Activated CD4-positive, alpha-beta T cell treated with anti-CD3 and anti-CD28 coated beads for 36 hours (primary cell): ENCODE measurements at regions of chr15 and their contacts with region 1.

Region 1: DNA sequence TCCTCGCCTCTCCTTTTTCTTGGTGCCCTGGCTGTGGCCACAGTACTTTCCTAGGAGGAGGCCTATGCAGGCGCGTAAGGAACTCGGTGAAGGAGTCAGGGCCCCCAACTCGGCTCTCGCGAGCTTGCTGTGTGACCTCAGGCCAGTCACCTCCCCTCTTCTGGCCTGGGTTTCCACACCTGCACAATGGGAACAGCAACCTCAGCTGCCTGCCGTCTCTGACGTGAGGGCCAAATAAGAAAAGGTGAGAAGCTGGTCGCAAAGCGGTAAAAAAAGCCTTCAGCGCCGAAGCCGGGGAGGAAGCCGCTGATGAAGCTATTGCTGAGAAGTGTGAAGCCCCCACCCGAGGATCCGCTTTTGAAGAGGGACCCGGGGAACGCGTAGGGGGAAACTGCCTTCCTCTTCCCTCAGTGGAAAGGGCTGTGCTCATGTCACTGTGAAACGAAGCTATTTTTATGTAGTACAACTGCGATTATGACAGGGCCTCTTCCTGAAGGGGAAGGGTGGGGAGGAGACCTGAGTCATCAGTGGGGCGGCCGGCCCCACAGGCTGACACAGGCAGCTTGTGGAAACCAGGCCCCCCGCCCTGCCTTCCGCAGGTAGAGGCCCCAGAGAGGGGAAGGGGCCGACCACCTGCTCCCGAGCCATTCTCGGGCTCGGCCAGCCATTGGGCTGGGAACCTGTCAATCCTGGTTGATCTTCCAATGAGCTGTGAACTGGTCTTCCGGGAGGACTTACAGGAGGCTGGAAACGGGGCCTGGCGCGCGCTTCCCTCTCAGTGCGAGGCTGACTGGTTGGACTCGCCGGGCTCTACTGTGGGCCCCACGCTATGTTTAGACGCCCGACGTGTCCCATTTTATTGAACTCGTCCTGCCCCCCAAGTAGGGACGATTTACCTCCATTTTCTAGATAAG is 18.0 kb upstream of the ANKDD1A start:
- DNase-seq: peak; percentile 99
- ATAC-seq: peak; percentile 84
- H3K4me3 Mint-ChIP-seq: peak overlapping the region; percentile 94
- H3K27ac Mint-ChIP-seq: peak overlapping the region; percentile 93
- H3K4me1 Mint-ChIP-seq: peaks cover 54% of the 10 kb centered on the region
- H3K27me3 Mint-ChIP-seq: no peaks in the 10 kb centered on the region

Region 2: GRCh38 chr15:63188926-63189871 is 1704.5 kb before region 1 on chr15 and contains the start of gene RAB8B:
- CTCF ChIA-PET with region 1: no interaction called
- POLR2A ChIA-PET with region 1: no interaction called
- intact Hi-C with region 1: loop called in 1 of 2 experiments (anchors 5 kb)
- DNase-seq: peak; percentile 100
- ATAC-seq: peak; percentile 76
- H3K4me3 Mint-ChIP-seq: peak within 1 kb of the TSS; percentile 99
- H3K27ac Mint-ChIP-seq: peak within 1 kb of the TSS; percentile 97
- H3K4me1 Mint-ChIP-seq: peaks cover 39% of the 10 kb centered on the region
- H3K27me3 Mint-ChIP-seq: no peaks in the 10 kb centered on the region
- total RNA-seq, gene RAB8B: 147 to 260 TPM

Region 3: GRCh38 chr15:64387562-64388168 is 506.1 kb before region 1 on chr15 and contains the start of gene TRIP4:
- CTCF ChIA-PET with region 1: no interaction called
- POLR2A ChIA-PET with region 1: no interaction called
- intact Hi-C with region 1: loop called in 1 of 2 experiments (anchors 1 kb)
- DNase-seq: peak; percentile 98
- ATAC-seq: peak; percentile 100
- H3K4me3 Mint-ChIP-seq: peak within 1 kb of the TSS; percentile 85
- H3K27ac Mint-ChIP-seq: peak within 1 kb of the TSS; percentile 91
- H3K4me1 Mint-ChIP-seq: peaks cover 17% of the 10 kb centered on the region
- H3K27me3 Mint-ChIP-seq: no peaks in the 10 kb centered on the region
- total RNA-seq, gene TRIP4: 13.1 to 19.6 TPM

Region 4: GRCh38 chr15:64800476-64800875 is 93.3 kb before region 1 on chr15:
- CTCF ChIA-PET with region 1: no interaction called
- POLR2A ChIA-PET with region 1: no interaction called
- intact Hi-C with region 1: no loop called
- DNase-seq: no peak
- ATAC-seq: no peak
- H3K4me3 Mint-ChIP-seq: no peak overlapping the region
- H3K27ac Mint-ChIP-seq: no peak overlapping the region
- H3K4me1 Mint-ChIP-seq: no peaks in the 10 kb centered on the region
- H3K27me3 Mint-ChIP-seq: no peaks in the 10 kb centered on the region

Region 5: GRCh38 chr15:64825431-64826294 is 68.1 kb before region 1 on chr15 and contains the start of gene PIF1:
- CTCF ChIA-PET with region 1: interaction called, 5 read pairs
- POLR2A ChIA-PET with region 1: interaction called, 5 read pairs
- intact Hi-C with region 1: loop called (anchors 1 kb)
- DNase-seq: peak; percentile 92
- ATAC-seq: peak; percentile 94
- H3K4me3 Mint-ChIP-seq: peak within 1 kb of the TSS; percentile 87
- H3K27ac Mint-ChIP-seq: peak within 1 kb of the TSS; percentile 93
- H3K4me1 Mint-ChIP-seq: peaks cover 23% of the 10 kb centered on the region
- H3K27me3 Mint-ChIP-seq: peaks cover 6% of the 10 kb centered on the region
- total RNA-seq, gene PIF1: 30.0 to 36.3 TPM

Region 6: GRCh38 chr15:64905119-64905831 is 11.5 kb after region 1 on chr15:
- CTCF ChIA-PET with region 1: interaction called, 14 read pairs
- POLR2A ChIA-PET with region 1: interaction called, 9 read pairs
- intact Hi-C with region 1: loop called (anchors 1 kb)
- DNase-seq: peak; percentile 91
- ATAC-seq: peak; percentile 87
- H3K4me3 Mint-ChIP-seq: peak overlapping the region; percentile 67
- H3K27ac Mint-ChIP-seq: peak overlapping the region; percentile 87
- H3K4me1 Mint-ChIP-seq: peaks cover 34% of the 10 kb centered on the region
- H3K27me3 Mint-ChIP-seq: peaks cover 6% of the 10 kb centered on the region

Region 7: DNA sequence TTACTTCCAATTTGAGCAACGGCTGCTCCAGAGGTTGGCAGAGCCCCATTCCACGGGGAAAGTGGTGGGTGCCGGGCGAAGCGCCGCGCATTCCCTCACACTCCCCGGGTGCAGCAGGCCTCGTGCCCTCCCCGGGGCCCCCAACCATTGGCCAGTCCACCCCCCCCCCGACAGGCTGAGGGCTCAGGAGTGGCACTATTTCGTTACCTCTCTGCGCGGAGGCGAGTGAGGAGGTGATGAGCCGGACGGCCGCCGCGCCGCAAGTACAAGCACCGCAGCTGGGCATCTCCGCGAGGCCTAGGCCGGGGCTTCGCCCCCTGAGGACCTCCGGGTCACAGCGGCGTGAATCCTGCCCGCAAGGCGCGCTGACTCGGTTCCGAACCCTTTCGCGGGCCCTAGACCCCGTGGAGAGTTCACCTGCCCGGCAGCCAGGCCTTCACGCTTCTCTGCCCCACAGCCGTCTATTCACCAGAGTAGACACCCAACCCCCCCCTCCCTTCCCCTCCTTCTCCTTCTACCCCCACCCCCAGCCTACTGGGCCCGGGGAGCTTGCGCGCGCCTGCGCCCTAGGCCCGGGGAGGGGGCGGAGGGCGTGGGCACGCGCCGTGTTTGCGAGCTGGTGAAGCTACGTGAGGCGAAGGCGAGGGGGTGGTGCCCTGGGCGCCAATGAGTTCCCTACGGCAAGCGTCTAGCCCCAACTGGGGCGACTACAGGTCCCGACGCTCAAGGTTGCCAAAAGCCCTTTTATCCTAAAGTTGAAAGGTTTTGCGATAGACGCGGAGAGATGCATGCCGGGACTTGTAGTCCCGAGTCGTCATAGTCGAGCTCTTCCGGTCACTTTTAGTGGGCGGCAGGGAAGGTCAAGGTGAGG is 291.4 kb after region 1 on chr15 and contains the start of gene CLPX:
- CTCF ChIA-PET with region 1: no interaction called
- POLR2A ChIA-PET with region 1: no interaction called
- intact Hi-C with region 1: loop called in 1 of 2 experiments (anchors 1 kb)
- DNase-seq: peak; percentile 95
- ATAC-seq: peak; percentile 93
- H3K4me3 Mint-ChIP-seq: peak within 1 kb of the TSS; percentile 92
- H3K27ac Mint-ChIP-seq: peak within 1 kb of the TSS; percentile 89
- H3K4me1 Mint-ChIP-seq: peaks cover 28% of the 10 kb centered on the region
- H3K27me3 Mint-ChIP-seq: no peaks in the 10 kb centered on the region
- total RNA-seq, gene CLPX: 65.2 to 73.7 TPM